ENCODE measurements at regions of chr2 and their contacts with region 1.

Region 1: DNA sequence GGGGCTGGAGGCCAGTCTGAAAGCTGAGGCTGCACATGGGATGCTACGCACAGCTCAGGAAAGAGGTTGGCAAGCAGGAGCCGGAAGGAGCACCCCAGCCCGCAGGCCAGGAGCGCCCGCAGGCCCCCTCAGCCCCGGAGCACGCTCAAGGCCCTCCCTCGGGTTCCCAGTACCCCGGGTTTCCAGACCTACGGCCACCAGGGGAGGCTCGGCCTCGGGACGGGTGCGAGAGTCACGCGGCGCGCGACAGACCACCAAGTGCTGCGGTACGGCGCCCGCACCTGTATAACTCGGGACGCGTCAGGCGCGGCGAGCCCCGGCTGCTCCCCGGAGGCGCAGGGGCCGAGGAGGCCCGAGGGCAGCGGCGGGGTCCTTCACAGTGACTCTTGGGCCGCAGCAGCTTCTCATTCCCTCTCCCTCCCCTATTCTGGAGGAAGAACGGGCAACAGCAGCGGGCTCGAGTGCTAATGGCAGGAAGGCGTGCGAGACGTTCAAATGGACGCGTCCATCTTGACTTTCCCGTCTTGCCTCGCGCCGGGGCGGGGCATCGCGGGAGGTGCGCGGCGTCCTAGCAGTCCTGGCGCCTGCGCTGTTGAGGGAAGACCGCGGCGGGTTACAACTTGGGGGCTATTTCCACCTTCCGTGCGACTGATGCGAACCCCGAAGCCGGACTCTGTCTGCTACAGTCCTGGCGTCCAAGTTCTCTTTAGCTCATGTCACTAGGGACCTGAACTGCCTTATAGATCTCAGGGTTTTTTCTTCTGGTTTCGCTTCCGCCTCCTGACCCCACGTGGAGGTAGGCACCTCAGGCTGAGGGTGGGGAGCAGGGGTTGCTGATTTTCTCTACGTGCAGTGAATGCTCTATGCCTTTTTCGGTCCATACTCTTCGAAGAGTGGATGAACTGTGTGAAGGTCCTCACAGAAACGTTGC is at the start of gene ANAPC1:
- DNase-seq: peak; percentile 74
- H3K4me3 ChIP-seq: peak within 1 kb of the TSS; percentile 95
- H3K27ac ChIP-seq: peak within 1 kb of the TSS; percentile 51
- H3K27me3 ChIP-seq: no peaks in the 10 kb centered on the region
- CTCF ChIP-seq: no peak

Region 2: DNA sequence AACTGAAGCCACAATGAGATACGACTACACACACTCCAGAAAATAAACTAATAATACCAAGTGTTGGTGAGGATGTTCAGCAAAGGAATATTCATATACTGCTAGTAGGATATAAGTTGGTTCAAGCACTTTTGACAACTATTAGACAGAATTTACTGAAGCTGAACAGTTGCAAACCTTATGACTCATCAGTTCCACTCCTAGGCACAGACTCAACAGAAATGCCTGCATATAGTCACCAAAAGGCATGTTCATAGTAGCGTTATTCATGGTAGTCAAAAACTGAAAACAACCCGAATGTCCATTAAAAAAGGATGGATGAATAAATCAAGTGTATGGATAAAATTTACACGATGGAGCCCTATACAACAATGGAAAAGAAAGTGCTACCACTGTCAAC is 231.9 kb before region 1 on chr2:
- in situ Hi-C with region 1: no loop called
- DNase-seq: no peak
- H3K4me3 ChIP-seq: no peak overlapping the region
- H3K27ac ChIP-seq: no peak overlapping the region
- H3K27me3 ChIP-seq: no peaks in the 10 kb centered on the region
- CTCF ChIP-seq: no peak

Region 3: DNA sequence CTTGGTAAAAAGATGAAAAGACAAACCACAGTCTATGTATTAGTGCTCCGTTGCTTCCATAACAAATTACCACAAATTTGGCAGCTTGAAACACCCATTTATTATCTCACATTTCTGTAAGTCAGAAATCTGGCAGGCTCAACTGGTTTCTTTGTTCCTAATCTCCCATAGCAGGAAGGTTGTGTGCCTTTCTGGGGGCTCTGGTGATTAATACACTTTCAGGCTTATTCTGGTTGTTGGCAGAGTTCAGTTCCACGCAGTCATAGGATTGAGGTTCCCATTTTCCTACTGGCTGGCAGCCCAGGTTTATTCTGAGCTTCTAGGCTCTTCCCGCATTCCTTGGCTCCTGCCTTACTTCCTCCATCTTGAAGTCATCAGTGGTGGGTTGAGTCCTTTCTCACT is 189.2 kb before region 1 on chr2:
- in situ Hi-C with region 1: no loop called
- DNase-seq: peak; percentile 24
- H3K4me3 ChIP-seq: no peak overlapping the region
- H3K27ac ChIP-seq: no peak overlapping the region
- H3K27me3 ChIP-seq: no peaks in the 10 kb centered on the region
- CTCF ChIP-seq: no peak

Region 4: GRCh38 chr2:112048887-112049286 is 165.0 kb after region 1 on chr2:
- in situ Hi-C with region 1: loop called (anchors 25 kb)
- DNase-seq: peak; percentile 59
- H3K4me3 ChIP-seq: no peak overlapping the region
- H3K27ac ChIP-seq: no peak overlapping the region
- H3K27me3 ChIP-seq: no peaks in the 10 kb centered on the region
- CTCF ChIP-seq: peak; percentile 69

Measured in brain microvascular endothelial cell (primary cell).